Activated naive CD4-positive, alpha-beta T cell treated with anti-CD3 and anti-CD28 coated beads for 36 hours (primary cell): ENCODE measurements at regions of chr15 and their contacts with region 1.

Region 1: GRCh38 chr15:34942363-34942762 is 27.2 kb downstream of the AQR start:
- DNase-seq: no peak
- H3K4me3 Mint-ChIP-seq: no peak overlapping the region
- H3K27ac Mint-ChIP-seq: no peak overlapping the region
- H3K4me1 Mint-ChIP-seq: no peaks in the 10 kb centered on the region
- H3K27me3 Mint-ChIP-seq: no peaks in the 10 kb centered on the region

Region 2: GRCh38 chr15:33756961-33757360 is 1185.4 kb before region 1 on chr15:
- CTCF ChIA-PET with region 1: no interaction called
- intact Hi-C with region 1: loop called (anchors 10 kb)
- DNase-seq: no peak
- H3K4me3 Mint-ChIP-seq: no peak overlapping the region
- H3K27ac Mint-ChIP-seq: no peak overlapping the region
- H3K4me1 Mint-ChIP-seq: no peaks in the 10 kb centered on the region
- H3K27me3 Mint-ChIP-seq: peaks cover 23% of the 10 kb centered on the region

Region 3: DNA sequence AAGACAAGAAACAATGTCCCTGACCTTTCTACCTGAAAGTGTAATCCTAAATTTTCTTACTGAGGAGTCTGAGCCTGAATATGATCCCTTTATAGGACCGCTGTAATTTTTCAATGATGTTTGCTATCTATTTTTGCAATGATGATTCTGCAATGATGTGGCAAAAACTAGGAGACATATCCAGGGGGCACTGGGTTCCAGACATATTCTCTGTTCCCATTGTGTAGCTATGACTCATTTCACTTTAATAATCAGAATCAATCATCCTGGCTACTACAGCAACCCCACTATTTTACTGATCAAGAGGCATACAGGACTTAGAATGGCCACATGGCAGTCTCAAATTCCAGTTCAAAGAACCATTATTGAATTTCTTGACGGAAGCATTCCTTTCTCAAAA is 58.7 kb before region 1 on chr15:
- CTCF ChIA-PET with region 1: interaction called, 3 read pairs
- intact Hi-C with region 1: loop called (anchors 5 kb)
- DNase-seq: no peak
- H3K4me3 Mint-ChIP-seq: no peak overlapping the region
- H3K27ac Mint-ChIP-seq: no peak overlapping the region
- H3K4me1 Mint-ChIP-seq: no peaks in the 10 kb centered on the region
- H3K27me3 Mint-ChIP-seq: no peaks in the 10 kb centered on the region